Prostate gland (tissue), 2 donors: ENCODE measurements at regions of chr14 and their contacts with region 1.

Region 1: DNA sequence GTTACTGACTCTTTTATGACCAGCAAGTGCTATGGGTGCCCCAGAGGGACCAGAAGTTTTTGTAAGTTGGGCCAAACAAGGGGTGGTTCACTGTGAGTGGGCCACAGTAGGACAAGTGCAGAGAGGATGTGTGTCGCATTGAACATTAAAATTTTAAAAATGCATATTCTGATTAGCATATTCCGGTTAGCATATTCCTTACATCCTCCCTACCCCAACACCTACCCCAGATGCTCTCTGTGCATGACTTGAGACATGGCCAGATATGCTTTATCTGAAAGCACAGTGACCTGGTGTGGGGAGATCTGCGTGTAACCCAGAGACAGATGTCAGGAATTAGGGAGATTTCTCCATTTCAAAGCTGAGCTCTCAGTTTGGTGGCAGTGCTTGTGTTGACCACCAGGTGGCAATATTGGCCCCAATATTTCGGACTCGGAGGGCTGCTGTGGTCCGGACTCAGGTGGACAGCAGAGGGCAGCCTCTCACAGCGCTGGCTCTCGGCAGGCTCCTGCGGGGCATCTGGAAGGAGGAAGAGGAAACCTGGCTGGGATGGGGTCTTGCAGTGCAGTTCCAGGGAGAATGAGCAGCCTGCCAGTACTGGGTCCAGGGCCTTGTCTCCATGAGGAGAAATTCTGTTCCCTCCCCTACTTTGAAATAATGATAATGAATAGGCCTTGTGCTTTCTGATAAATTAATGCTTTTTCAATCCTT is 1.6 kb upstream of the CEBPE start:
- DNase-seq: peak; percentile 88
- H3K4me3 ChIP-seq: no peak overlapping the region
- H3K27ac ChIP-seq: peak overlapping the region in 1 of 2 donors; percentile 0
- H3K4me1 ChIP-seq: no peaks in the 10 kb centered on the region
- H3K27me3 ChIP-seq: peaks cover 3% of the 10 kb centered on the region
- CTCF ChIP-seq: peak; percentile 99 to 100 (median 100)
- POLR2A ChIP-seq: no peak

Region 2: DNA sequence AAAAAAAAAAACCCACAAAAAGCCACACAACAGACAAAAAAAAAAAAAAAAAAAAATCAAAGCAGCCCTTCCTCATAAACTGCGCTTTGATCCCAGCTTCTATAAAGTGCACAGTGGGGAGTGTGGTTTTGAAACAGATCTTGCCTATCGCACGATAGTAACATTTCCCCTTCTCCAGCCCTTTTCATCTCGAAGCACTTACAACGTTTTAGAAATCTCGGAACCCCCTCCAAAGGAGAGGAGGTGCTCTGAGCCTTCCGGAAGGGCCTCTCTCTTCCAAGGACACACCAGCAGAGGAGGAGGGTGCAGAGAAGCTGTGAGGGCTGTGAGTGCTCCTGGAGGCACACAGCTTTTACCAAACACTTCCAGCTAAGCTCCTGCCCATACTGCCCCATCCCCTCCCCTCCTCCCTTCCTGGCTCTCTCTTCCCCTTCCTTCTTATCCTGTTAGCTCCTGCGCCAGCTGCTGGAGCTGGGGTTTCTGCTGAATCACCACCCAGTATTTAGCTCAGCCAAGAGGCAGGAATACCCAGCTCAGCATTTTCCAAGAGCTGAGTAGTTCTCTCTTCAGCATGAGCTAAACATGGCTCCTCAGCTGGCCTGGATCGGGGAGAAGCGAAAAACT is 34.4 kb after region 1 on chr14:
- intact Hi-C with region 1: loop called (anchors 2 kb)
- DNase-seq: peak; percentile 91
- H3K4me3 ChIP-seq: peak overlapping the region in 1 of 2 donors; percentile 28
- H3K27ac ChIP-seq: peak overlapping the region; percentile 91 to 97
- H3K4me1 ChIP-seq: peaks cover 25% of the 10 kb centered on the region
- H3K27me3 ChIP-seq: no peaks in the 10 kb centered on the region
- CTCF ChIP-seq: peak in 1 of 4 experiments; percentile 35
- POLR2A ChIP-seq: no peak

Region 3: GRCh38 chr14:23301288-23301968 is 180.7 kb after region 1 on chr14:
- intact Hi-C with region 1: loop called (anchors 10 kb)
- DNase-seq: peak; percentile 97
- H3K4me3 ChIP-seq: peak overlapping the region; percentile 63 to 78
- H3K27ac ChIP-seq: peak overlapping the region; percentile 98 to 99
- H3K4me1 ChIP-seq: no peaks in the 10 kb centered on the region
- H3K27me3 ChIP-seq: no peaks in the 10 kb centered on the region
- CTCF ChIP-seq: peak; percentile 87 to 97 (median 93)
- POLR2A ChIP-seq: peak; percentile 74

Region 4: DNA sequence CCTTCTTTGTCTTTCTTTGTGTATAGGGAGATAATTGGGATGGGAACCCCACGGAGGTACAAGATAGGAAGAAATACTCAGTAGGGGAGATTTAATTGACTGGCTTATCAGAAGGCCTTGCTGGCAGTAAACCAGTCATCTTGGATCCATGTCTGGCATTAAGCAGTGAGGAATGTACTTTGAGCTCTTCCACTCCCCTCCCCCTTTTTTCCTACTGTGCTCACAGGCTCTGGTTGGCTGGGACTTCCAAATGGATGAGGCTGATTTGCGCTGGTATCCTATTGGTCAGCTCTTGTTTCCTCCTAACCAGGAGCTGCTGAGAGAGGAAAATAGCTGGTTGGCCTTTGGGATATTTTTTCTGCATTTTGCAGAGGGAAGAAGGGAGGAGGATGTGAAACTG is 373.5 kb after region 1 on chr14:
- intact Hi-C with region 1: no loop called
- DNase-seq: no peak
- H3K4me3 ChIP-seq: no peak overlapping the region
- H3K27ac ChIP-seq: no peak overlapping the region
- H3K4me1 ChIP-seq: no peaks in the 10 kb centered on the region
- H3K27me3 ChIP-seq: no peaks in the 10 kb centered on the region
- CTCF ChIP-seq: no peak
- POLR2A ChIP-seq: no peak